ENCODE measurements at regions of chr5 and their contacts with region 1.

Region 1: DNA sequence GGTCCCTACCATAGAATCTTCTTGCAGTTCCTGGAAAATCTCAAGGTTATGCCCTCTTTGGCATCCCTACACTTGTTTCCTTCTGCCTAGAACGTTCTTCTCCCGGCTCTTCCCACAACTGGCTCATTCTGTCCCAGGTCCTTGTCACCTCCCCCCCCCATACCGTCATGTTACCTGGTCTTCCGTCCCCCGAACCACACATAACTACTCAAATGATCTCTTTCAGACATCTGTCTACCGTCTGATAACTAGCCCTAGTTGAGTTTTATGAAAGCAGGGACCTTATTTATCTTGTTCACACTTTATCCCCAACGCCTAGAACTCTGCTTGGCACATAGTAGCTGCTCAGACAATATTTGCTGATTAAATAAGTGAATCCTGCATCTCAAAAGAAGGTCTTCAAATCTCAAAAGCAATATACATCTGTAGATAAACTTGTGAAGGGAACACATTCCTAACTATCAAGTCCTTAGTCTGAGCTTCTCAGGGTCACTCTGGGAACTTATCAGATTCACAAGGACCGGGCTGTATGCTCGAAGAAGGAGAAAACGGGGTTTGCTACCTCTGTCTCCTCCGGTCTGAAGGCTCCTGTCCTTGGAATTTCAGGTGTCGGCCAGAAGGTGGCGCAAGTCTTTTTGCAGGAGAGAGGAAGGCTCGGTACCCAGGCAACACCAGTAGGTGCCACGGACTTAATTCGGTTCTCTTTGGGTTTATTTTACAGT is 30.0 kb downstream of the LCP2 start:
- DNase-seq: peak; percentile 73 to 83 (median 78)
- ATAC-seq: peak; percentile 57 to 75 (median 70)
- H3K4me3 ChIP-seq: peak overlapping the region in 4 of 12 donors; percentile 4 to 34 (median 6)
- H3K27ac ChIP-seq: peak overlapping the region in 5 of 12 donors; percentile 6 to 94 (median 47)
- H3K4me1 ChIP-seq: peaks cover 0 to 89% (median 10%) of the 10 kb centered on the region in 12 donors
- H3K27me3 ChIP-seq: peaks cover 0 to 5% (median 0%) of the 10 kb centered on the region in 9 donors
- CTCF ChIP-seq: peak; percentile 71 to 90 (median 84)
- POLR2A ChIP-seq: no peak

Region 2: DNA sequence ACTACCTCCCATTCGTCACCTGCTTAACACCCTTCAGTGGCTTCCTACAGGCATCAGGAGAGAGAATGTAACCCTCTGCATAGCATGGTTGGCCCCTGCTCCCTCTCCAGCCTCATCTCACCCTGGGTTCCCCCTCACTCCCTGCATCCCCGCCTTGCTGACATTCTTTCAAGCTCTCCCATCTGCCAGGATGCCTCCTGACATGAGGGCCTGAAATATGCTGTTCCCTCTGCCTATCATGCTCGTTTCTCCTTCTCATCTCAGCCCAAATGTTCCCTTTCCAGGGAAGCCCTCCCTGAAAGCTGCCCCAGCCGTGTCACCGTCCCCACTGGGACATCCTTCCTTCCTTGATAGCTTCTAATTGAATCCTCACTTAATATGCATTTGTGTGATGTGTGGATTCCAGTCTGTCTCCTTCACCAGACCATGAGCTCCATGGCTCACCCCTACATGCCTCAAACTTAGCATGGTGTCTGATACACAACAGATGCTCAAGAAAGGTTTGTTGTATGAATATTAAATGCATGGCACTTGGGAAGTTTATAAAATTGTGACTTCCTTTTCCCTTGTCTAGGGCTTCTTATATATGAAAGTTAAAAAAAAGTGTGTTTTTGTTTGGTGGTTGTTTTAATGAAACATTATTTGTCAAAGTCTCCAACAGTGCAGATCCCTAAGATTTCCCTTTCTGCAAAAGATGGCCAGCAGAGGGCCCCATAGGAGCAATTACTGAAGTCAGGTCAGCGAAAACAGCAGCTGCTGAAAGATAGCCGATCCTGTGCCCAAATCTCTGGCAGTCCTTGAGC is 42.1 kb before region 1 on chr5:
- intact Hi-C with region 1: loop called in 1 of 10 experiments (anchors 2 kb)
- DNase-seq: peak; percentile 70 to 82 (median 71)
- ATAC-seq: peak in 3 of 4 donors; percentile 73 to 82 (median 80)
- H3K4me3 ChIP-seq: no peak overlapping the region
- H3K27ac ChIP-seq: no peak overlapping the region
- H3K4me1 ChIP-seq: peaks cover 0 to 34% (median 0%) of the 10 kb centered on the region in 12 donors
- H3K27me3 ChIP-seq: no peaks in the 10 kb centered on the region
- CTCF ChIP-seq: peak; percentile 63 to 86 (median 78)
- POLR2A ChIP-seq: no peak

Region 3: GRCh38 chr5:170338933-170339779 is 71.6 kb after region 1 on chr5:
- intact Hi-C with region 1: loop called in 6 of 10 experiments (anchors 5 to 10 kb)
- DNase-seq: no peak
- ATAC-seq: peak in 3 of 4 donors; percentile 38 to 63 (median 62)
- H3K4me3 ChIP-seq: no peak overlapping the region
- H3K27ac ChIP-seq: no peak overlapping the region
- H3K4me1 ChIP-seq: peaks cover 0 to 50% (median 0%) of the 10 kb centered on the region in 12 donors
- H3K27me3 ChIP-seq: no peaks in the 10 kb centered on the region
- CTCF ChIP-seq: peak in 11 of 12 donors; percentile 25 to 58 (median 41)
- POLR2A ChIP-seq: no peak

Region 4: GRCh38 chr5:170357955-170358444 is 90.4 kb after region 1 on chr5:
- intact Hi-C with region 1: loop called in 1 of 10 experiments (anchors 5 kb)
- DNase-seq: peak; percentile 59 to 83 (median 64)
- ATAC-seq: peak; percentile 30 to 65 (median 44)
- H3K4me3 ChIP-seq: no peak overlapping the region
- H3K27ac ChIP-seq: peak overlapping the region in 9 of 12 donors; percentile 6 to 83 (median 45)
- H3K4me1 ChIP-seq: peaks cover 0 to 83% (median 52%) of the 10 kb centered on the region in 12 donors
- H3K27me3 ChIP-seq: peaks cover 0 to 6% (median 0%) of the 10 kb centered on the region in 9 donors
- CTCF ChIP-seq: no peak
- POLR2A ChIP-seq: no peak

Region 5: DNA sequence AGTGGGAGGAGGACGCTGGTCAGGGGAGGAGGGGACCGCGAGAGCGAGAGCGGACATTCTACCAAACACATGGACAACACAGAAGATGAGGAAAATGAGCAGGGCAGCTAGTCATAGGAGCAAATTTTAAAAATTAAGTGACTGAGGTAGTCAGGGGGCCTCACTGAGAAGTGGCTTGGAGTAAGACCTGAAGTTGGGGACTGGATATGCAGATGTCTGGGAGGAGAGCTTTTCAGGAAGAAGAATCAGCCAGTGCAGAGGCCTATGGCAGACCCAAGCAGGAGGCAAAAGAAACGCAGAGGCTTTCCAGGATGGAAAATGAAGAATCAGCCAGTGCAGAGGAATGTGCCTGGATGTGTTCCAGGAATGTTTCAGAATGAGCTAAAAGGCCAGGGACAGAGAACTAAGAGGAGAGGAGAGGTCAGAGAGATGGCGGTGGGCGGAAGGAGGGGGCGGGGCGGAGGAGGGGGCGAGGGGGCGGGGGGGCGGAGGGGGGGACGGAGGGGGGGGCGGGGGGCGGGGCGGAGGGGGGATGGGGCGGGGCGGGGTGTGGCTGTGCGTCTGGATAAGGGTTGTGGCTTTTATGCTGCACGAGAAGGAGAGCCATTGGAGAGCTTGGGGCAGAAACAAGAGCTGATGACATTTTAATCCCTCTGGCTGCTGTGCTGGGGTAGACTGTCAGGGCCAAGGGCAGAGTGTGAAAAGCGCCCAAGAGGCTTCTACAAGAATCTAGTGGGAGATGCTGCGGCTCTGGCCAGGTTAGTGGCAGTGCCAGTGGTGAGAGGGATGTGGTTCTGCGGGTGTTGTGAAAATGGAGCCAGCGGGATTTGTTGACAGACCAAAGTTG is 365.9 kb after region 1 on chr5:
- intact Hi-C with region 1: loop called in 4 of 10 experiments (anchors 5 to 10 kb)
- DNase-seq: peak in 4 of 5 donors; percentile 44 to 78 (median 62)
- ATAC-seq: peak; percentile 62 to 79 (median 69)
- H3K4me3 ChIP-seq: peak overlapping the region in 11 of 12 donors; percentile 11 to 55 (median 39)
- H3K27ac ChIP-seq: peak overlapping the region; percentile 30 to 93 (median 79)
- H3K4me1 ChIP-seq: peaks cover 0 to 39% (median 20%) of the 10 kb centered on the region in 12 donors
- H3K27me3 ChIP-seq: no peaks in the 10 kb centered on the region
- CTCF ChIP-seq: peak in 3 of 12 donors; percentile 5 to 33 (median 30)
- POLR2A ChIP-seq: no peak

Measured in heart left ventricle (tissue), 16 donors.